ENCODE measurements at regions of chr15 and their contacts with region 1.

Region 1: DNA sequence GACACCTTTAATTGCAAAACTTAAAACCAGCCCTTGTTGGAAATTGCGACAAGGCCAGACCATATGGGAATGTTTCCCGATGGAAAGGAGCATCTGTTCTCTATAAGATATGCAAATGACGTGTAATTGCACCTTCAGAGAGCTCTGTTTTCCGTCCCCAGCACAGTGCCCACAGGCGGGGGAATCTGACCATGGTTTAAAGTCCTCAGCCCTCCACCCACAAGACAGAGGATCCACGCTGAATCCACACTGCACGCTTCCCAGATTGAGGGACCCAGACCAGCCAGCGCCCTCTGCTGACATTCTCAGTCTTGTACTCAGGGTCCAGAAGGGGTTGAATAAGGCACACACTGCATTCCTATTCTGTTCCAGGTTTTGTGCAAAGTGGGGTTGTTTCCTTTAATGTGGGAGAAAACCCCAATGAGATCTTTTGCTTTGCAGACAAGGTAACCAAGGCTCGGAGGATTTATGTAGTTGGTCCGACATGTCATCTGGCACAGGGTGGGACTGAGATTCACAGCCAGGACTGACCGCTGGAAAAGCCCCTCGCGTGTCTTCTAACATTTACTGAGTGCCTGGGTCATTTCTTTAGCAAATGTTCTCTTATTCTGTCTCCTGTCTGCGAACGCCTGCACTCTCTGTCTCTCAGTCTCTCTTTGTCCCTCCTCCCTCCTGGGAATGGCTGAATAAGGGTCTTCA is 36.8 kb upstream of the KLHL25 start:
- DNase-seq: no peak
- ATAC-seq: peak; percentile 83
- H3K4me3 ChIP-seq: no peak overlapping the region
- H3K27ac ChIP-seq: no peak overlapping the region
- H3K4me1 ChIP-seq: no peaks in the 10 kb centered on the region
- H3K27me3 ChIP-seq: no peaks in the 10 kb centered on the region
- CTCF ChIP-seq: peak; percentile 63

Region 2: GRCh38 chr15:85730001-85730820 is 101.4 kb before region 1 on chr15:
- intact Hi-C with region 1: loop called (anchors 10 kb)
- DNase-seq: no peak
- ATAC-seq: peak; percentile 85
- H3K4me3 ChIP-seq: no peak overlapping the region
- H3K27ac ChIP-seq: no peak overlapping the region
- H3K4me1 ChIP-seq: peaks cover 9% of the 10 kb centered on the region
- H3K27me3 ChIP-seq: no peaks in the 10 kb centered on the region
- CTCF ChIP-seq: peak; percentile 73